Endothelial cell of umbilical vein (primary cell): ENCODE measurements at regions of chr12 and their contacts with region 1.

Region 1: DNA sequence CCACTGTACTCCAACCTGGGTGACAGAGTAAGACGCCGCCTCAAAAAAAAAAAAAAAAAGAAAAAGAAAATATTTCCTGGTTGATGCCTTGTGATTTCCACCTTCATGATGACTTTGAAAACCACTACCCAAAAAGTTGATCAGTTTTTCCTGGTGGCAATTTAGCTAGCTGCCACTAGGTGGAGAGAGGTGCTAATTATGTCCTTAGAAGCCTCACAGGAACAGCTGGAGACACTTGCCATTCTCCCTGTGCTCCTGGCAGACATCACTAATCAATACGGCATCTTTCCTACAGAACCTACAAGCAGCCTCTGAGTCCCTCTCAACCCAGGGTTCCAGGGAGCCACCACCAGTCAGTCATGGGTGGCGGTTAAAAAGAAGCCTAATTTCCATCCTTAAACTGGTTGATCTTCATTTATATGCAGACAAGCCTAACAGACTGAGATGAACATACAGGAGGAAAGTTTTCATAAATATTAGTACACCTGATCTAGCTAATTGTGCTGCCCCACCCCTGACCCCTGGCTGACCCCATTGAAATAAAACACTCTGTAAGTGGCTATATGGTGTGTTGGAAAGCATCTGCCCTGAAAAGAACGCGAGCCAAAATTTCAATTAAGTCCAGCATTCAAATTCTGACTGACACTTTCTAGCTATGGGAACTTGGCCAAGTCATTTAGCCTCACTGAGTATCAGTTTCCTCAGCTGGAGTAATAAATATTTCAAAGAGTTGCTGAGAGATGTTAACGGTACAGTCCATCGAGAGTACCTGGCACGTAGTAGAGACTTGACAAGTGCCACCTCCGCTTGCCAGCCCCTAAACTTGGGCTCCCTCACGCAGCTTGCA is 6.2 kb upstream of the OAS1 start:
- DNase-seq: peak; percentile 58
- H3K4me3 ChIP-seq: no peak overlapping the region
- H3K27ac ChIP-seq: no peak overlapping the region
- H3K4me1 ChIP-seq: peaks cover 36% of the 10 kb centered on the region
- H3K27me3 ChIP-seq: peaks cover 0 to 8% of the 10 kb centered on the region in 2 experiments
- CTCF ChIP-seq: peak; percentile 70 to 71
- POLR2A ChIP-seq: no peak

Region 2: GRCh38 chr12:112447106-112447505 is 453.4 kb before region 1 on chr12:
- CTCF ChIA-PET with region 1: no interaction called
- POLR2A ChIA-PET with region 1: no interaction called
- dilution Hi-C with region 1: no loop called
- intact Hi-C with region 1: no loop called
- DNase-seq: peak; percentile 9
- H3K4me3 ChIP-seq: no peak overlapping the region
- H3K27ac ChIP-seq: no peak overlapping the region
- H3K4me1 ChIP-seq: peaks cover 2% of the 10 kb centered on the region
- H3K27me3 ChIP-seq: no peaks in the 10 kb centered on the region
- CTCF ChIP-seq: no peak
- POLR2A ChIP-seq: no peak

Region 3: GRCh38 chr12:112932494-112933128 is 32.1 kb after region 1 on chr12:
- CTCF ChIA-PET with region 1: interaction called, 15 read pairs
- POLR2A ChIA-PET with region 1: no interaction called
- dilution Hi-C with region 1: no loop called
- intact Hi-C with region 1: no loop called
- DNase-seq: no peak
- H3K4me3 ChIP-seq: no peak overlapping the region
- H3K27ac ChIP-seq: no peak overlapping the region
- H3K4me1 ChIP-seq: no peaks in the 10 kb centered on the region
- H3K27me3 ChIP-seq: peaks cover 0 to 1% of the 10 kb centered on the region in 2 experiments
- CTCF ChIP-seq: no peak
- POLR2A ChIP-seq: no peak

Region 4: GRCh38 chr12:112937741-112938719 is 37.5 kb after region 1 on chr12 and contains the start of gene OAS3:
- CTCF ChIA-PET with region 1: interaction called, 15 read pairs
- POLR2A ChIA-PET with region 1: no interaction called
- dilution Hi-C with region 1: no loop called
- intact Hi-C with region 1: loop called (anchors 1 kb)
- DNase-seq: peak; percentile 57
- H3K4me3 ChIP-seq: peak within 1 kb of the TSS; percentile 45 to 68 (median 57)
- H3K27ac ChIP-seq: no peak within 1 kb of the TSS
- H3K4me1 ChIP-seq: peaks cover 5% of the 10 kb centered on the region
- H3K27me3 ChIP-seq: no peaks in the 10 kb centered on the region
- CTCF ChIP-seq: no peak
- POLR2A ChIP-seq: no peak
- total RNA-seq, gene OAS3: 15.9 and 19.8 TPM in 2 replicates

Region 5: GRCh38 chr12:112971248-112971647 is 70.7 kb after region 1 on chr12:
- CTCF ChIA-PET with region 1: no interaction called
- POLR2A ChIA-PET with region 1: no interaction called
- dilution Hi-C with region 1: no loop called
- intact Hi-C with region 1: loop called (anchors 1 kb)
- DNase-seq: peak; percentile 38
- H3K4me3 ChIP-seq: no peak overlapping the region
- H3K27ac ChIP-seq: no peak overlapping the region
- H3K4me1 ChIP-seq: peaks cover 9% of the 10 kb centered on the region
- H3K27me3 ChIP-seq: no peaks in the 10 kb centered on the region
- CTCF ChIP-seq: no peak
- POLR2A ChIP-seq: no peak

Region 6: GRCh38 chr12:112978163-112979040 is 77.9 kb after region 1 on chr12 and contains the start of gene OAS2:
- CTCF ChIA-PET with region 1: interaction called, 15 read pairs
- POLR2A ChIA-PET with region 1: no interaction called
- dilution Hi-C with region 1: no loop called
- intact Hi-C with region 1: loop called (anchors 1 kb)
- DNase-seq: peak; percentile 51
- H3K4me3 ChIP-seq: peak within 1 kb of the TSS in 2 of 3 experiments; percentile 26 to 66
- H3K27ac ChIP-seq: no peak within 1 kb of the TSS
- H3K4me1 ChIP-seq: peaks cover 6% of the 10 kb centered on the region
- H3K27me3 ChIP-seq: no peaks in the 10 kb centered on the region
- CTCF ChIP-seq: no peak
- POLR2A ChIP-seq: no peak
- total RNA-seq, gene OAS2: 2.4 and 3.1 TPM in 2 replicates

Region 7: GRCh38 chr12:113030875-113031525 is 130.5 kb after region 1 on chr12:
- CTCF ChIA-PET with region 1: interaction called, 12 read pairs
- POLR2A ChIA-PET with region 1: no interaction called
- dilution Hi-C with region 1: no loop called
- intact Hi-C with region 1: loop called (anchors 1 kb)
- DNase-seq: peak; percentile 77
- H3K4me3 ChIP-seq: no peak overlapping the region
- H3K27ac ChIP-seq: no peak overlapping the region
- H3K4me1 ChIP-seq: no peaks in the 10 kb centered on the region
- H3K27me3 ChIP-seq: no peaks in the 10 kb centered on the region
- CTCF ChIP-seq: peak; percentile 58 to 65
- POLR2A ChIP-seq: no peak

Region 8: DNA sequence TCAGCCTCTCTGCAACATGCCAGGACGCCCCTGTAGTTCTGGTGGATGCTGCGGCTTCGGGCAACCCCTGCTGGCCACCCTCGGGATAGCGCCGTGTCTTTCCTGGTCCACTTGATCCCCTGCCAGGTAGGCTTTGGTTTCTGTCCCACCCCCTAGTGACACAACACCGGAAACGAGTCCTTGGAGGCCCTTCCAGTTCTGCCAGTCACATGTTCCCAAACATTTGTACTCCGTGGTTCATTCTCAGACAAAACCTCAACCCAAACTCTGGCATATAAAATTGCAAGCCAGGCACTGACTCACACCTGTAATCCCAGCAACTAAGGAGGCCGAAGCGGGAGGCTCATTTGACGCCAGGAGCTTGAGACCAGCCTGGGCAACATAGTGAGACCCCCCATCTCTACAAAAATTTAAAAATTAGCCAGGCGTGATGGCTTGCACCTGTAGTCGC is 197.9 kb after region 1 on chr12:
- CTCF ChIA-PET with region 1: interaction called, 8 read pairs
- POLR2A ChIA-PET with region 1: no interaction called
- dilution Hi-C with region 1: no loop called
- intact Hi-C with region 1: loop called (anchors 1 kb)
- DNase-seq: peak; percentile 54
- H3K4me3 ChIP-seq: no peak overlapping the region
- H3K27ac ChIP-seq: no peak overlapping the region
- H3K4me1 ChIP-seq: no peaks in the 10 kb centered on the region
- H3K27me3 ChIP-seq: no peaks in the 10 kb centered on the region
- CTCF ChIP-seq: peak; percentile 75 to 87
- POLR2A ChIP-seq: no peak